Esophagus muscularis mucosa (tissue), 4 donors: ENCODE measurements at regions of chr3 and their contacts with region 1.

Region 1: GRCh38 chr3:179451265-179452175 is at the start of gene GNB4:
- DNase-seq: peak; percentile 93
- H3K4me3 ChIP-seq: peak within 1 kb of the TSS; percentile 66 to 90 (median 82)
- H3K27ac ChIP-seq: peak within 1 kb of the TSS; percentile 94 to 99 (median 96)
- H3K4me1 ChIP-seq: peaks cover 34 to 57% (median 45%) of the 10 kb centered on the region in 4 donors
- H3K27me3 ChIP-seq: no peaks in the 10 kb centered on the region
- CTCF ChIP-seq: no peak
- EP300 ChIP-seq: no peak
- POLR2A ChIP-seq: no peak
- total RNA-seq, gene GNB4: 57.7 to 130 (median 80.9) TPM

Region 2: GRCh38 chr3:179347345-179348194 is 104.0 kb before region 1 on chr3 and contains the start of gene MFN1:
- intact Hi-C with region 1: loop called (anchors 10 kb)
- DNase-seq: peak; percentile 99
- H3K4me3 ChIP-seq: peak within 1 kb of the TSS; percentile 77 to 94 (median 88)
- H3K27ac ChIP-seq: peak within 1 kb of the TSS; percentile 88 to 91 (median 88)
- H3K4me1 ChIP-seq: peaks cover 13 to 24% (median 15%) of the 10 kb centered on the region in 4 donors
- H3K27me3 ChIP-seq: no peaks in the 10 kb centered on the region
- CTCF ChIP-seq: no peak
- EP300 ChIP-seq: no peak
- POLR2A ChIP-seq: no peak
- total RNA-seq, gene MFN1: 32.8 to 48.6 (median 37.3) TPM

Region 3: GRCh38 chr3:179464323-179465089 is 13.0 kb after region 1 on chr3:
- intact Hi-C with region 1: no loop called
- DNase-seq: no peak
- H3K4me3 ChIP-seq: no peak overlapping the region
- H3K27ac ChIP-seq: no peak overlapping the region
- H3K4me1 ChIP-seq: no peaks in the 10 kb centered on the region
- H3K27me3 ChIP-seq: no peaks in the 10 kb centered on the region
- CTCF ChIP-seq: no peak
- EP300 ChIP-seq: no peak
- POLR2A ChIP-seq: no peak